ENCODE measurements at regions of chr19 and their contacts with region 1.

Region 1: DNA sequence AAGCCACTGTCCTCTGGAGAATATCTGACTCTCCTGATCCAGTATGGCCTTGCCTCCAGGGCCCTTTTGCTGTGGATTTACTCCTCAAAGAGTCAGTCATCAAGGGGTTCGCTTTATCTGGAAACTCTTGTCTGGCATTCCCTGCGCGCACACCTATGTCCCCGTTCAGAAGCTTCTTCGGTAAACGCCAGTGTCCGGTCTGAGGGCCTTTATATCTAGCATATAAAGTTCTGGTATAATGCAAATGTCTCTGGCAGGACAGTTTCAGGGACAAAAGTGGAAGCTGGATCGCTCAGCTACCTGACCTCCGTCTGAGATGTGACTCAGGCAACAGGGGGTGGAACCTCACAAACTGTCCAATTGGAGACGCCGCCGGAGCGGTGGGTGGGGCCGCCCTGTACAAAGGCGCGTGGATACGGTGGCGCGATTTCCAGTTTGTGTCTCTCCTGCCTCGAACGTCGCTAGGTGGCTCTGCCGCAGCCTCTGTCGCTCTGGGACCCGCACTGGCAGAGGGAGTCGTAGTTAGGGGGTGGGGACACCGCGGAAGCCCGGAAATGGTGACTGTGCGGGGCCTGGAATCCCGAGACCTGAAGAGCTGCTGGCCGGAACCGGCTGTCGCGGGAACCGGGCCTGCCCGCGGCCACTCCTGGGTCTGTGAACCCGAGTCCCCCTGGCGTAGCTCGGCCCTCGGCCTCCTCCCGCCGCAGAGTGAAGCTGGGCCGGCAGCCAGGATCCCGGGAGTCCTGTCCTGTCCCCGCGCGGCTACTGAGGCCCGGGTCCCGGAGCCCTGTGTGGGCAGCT is 10.6 kb upstream of the ZNF709 start:
- DNase-seq: peak; percentile 82
- ATAC-seq: peak; percentile 99
- H3K4me3 Mint-ChIP-seq: peak overlapping the region; percentile 90
- H3K27ac Mint-ChIP-seq: peak overlapping the region; percentile 82
- H3K4me1 Mint-ChIP-seq: peaks cover 13% of the 10 kb centered on the region
- H3K27me3 Mint-ChIP-seq: no peaks in the 10 kb centered on the region
- CTCF ChIP-seq: no peak

Region 2: GRCh38 chr19:12092065-12092867 is 402.9 kb before region 1 on chr19:
- CTCF ChIA-PET with region 1: no interaction called
- POLR2A ChIA-PET with region 1: no interaction called
- intact Hi-C with region 1: no loop called
- DNase-seq: peak; percentile 43
- ATAC-seq: peak; percentile 70
- H3K4me3 Mint-ChIP-seq: peak overlapping the region; percentile 83
- H3K27ac Mint-ChIP-seq: no peak overlapping the region
- H3K4me1 Mint-ChIP-seq: peaks cover 17% of the 10 kb centered on the region
- H3K27me3 Mint-ChIP-seq: peaks cover 3% of the 10 kb centered on the region
- CTCF ChIP-seq: no peak

Region 3: GRCh38 chr19:12365236-12366162 is 129.7 kb before region 1 on chr19 and contains the start of gene ZNF442:
- CTCF ChIA-PET with region 1: interaction called, 3 read pairs
- POLR2A ChIA-PET with region 1: interaction called, 15 read pairs
- intact Hi-C with region 1: no loop called
- DNase-seq: peak; percentile 68
- ATAC-seq: peak; percentile 97
- H3K4me3 Mint-ChIP-seq: peak within 1 kb of the TSS; percentile 96
- H3K27ac Mint-ChIP-seq: peak within 1 kb of the TSS; percentile 91
- H3K4me1 Mint-ChIP-seq: peaks cover 25% of the 10 kb centered on the region
- H3K27me3 Mint-ChIP-seq: no peaks in the 10 kb centered on the region
- CTCF ChIP-seq: no peak
- total RNA-seq, gene ZNF442: 6.9 and 8.7 TPM in 2 replicates

Region 4: GRCh38 chr19:12453491-12453890 is 41.7 kb before region 1 on chr19:
- CTCF ChIA-PET with region 1: no interaction called
- POLR2A ChIA-PET with region 1: no interaction called
- intact Hi-C with region 1: no loop called
- DNase-seq: no peak
- ATAC-seq: no peak
- H3K4me3 Mint-ChIP-seq: no peak overlapping the region
- H3K27ac Mint-ChIP-seq: no peak overlapping the region
- H3K4me1 Mint-ChIP-seq: no peaks in the 10 kb centered on the region
- H3K27me3 Mint-ChIP-seq: no peaks in the 10 kb centered on the region
- CTCF ChIP-seq: no peak

Region 5: DNA sequence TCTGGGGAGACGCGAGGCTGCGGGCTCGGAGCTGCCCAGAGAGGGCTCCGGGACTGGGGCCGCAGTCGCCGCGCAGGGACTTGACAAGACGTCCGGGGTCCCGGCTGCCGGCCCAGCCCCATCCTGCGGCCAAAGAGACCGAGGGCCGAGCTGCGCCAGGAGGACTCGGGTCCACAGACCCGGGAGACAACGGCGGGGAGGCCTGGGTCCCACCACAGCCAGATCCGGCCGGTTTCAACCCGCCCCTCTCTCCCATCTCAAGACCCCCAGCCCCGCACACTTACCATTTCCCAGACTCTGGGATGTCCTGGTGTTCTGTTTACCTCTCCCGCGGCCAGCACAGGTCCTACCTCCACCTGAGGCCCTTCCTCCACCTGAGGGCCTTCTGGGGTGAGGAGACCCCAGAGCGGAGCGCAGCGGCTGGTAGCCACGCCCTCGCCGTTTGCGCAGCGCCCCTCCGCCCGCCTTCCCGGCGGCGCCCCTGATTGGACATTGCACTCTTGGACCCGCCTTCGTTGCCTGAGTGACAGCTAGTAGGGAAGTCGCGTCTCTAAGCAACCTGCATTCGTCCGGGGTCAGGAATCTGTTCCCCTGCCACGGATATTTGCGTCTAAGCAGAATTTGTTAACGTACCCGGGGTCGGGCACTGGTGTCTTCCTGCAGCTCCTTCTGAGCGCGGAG is 10.7 kb before region 1 on chr19 and contains the start of gene ZNF709:
- CTCF ChIA-PET with region 1: interaction called, 5 read pairs
- POLR2A ChIA-PET with region 1: interaction called, 37 read pairs
- intact Hi-C with region 1: loop called (anchors 1 kb)
- DNase-seq: peak; percentile 90
- ATAC-seq: peak; percentile 98
- H3K4me3 Mint-ChIP-seq: peak within 1 kb of the TSS; percentile 96
- H3K27ac Mint-ChIP-seq: peak within 1 kb of the TSS; percentile 88
- H3K4me1 Mint-ChIP-seq: peaks cover 35% of the 10 kb centered on the region
- H3K27me3 Mint-ChIP-seq: no peaks in the 10 kb centered on the region
- CTCF ChIP-seq: no peak
- total RNA-seq, gene ZNF709: 4.8 and 6.4 TPM in 2 replicates

Region 6: DNA sequence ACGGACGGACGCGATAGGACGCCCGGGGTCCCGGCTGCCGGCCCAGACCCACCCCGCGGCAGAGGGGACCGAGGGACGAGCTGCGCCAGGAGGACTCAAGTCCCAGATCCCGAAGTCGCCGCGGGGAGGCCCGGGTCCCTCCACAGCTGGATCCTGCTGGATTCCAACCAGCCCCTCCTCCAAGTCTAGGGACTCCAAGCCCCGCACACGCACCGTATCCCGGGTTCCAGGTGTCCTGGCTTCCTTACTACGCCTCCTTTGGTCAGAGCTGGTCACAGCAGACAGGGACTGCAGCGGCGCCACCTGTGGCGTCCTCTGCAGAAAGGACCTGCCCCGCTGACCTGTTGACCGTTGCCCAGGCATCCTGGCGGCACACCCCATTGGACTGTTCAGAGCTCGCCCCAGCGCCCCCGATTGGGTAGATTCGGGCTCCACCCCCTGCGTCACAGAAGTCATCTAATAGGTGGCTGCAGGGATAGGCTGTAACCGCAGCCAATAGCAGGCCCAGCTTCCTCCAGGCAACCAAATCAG is 18.4 kb after region 1 on chr19:
- CTCF ChIA-PET with region 1: no interaction called
- POLR2A ChIA-PET with region 1: no interaction called
- intact Hi-C with region 1: loop called (anchors 1 kb)
- DNase-seq: no peak
- ATAC-seq: no peak
- H3K4me3 Mint-ChIP-seq: no peak overlapping the region
- H3K27ac Mint-ChIP-seq: no peak overlapping the region
- H3K4me1 Mint-ChIP-seq: no peaks in the 10 kb centered on the region
- H3K27me3 Mint-ChIP-seq: no peaks in the 10 kb centered on the region
- CTCF ChIP-seq: no peak

Region 7: GRCh38 chr19:12551060-12551832 is 56.0 kb after region 1 on chr19 and contains the start of gene ZNF564:
- CTCF ChIA-PET with region 1: no interaction called
- POLR2A ChIA-PET with region 1: interaction called, 9 read pairs
- intact Hi-C with region 1: loop called (anchors 1 kb)
- DNase-seq: peak; percentile 81
- ATAC-seq: peak; percentile 98
- H3K4me3 Mint-ChIP-seq: peak within 1 kb of the TSS; percentile 98
- H3K27ac Mint-ChIP-seq: peak within 1 kb of the TSS; percentile 94
- H3K4me1 Mint-ChIP-seq: peaks cover 48% of the 10 kb centered on the region
- H3K27me3 Mint-ChIP-seq: no peaks in the 10 kb centered on the region
- CTCF ChIP-seq: no peak
- total RNA-seq, gene ZNF564: 23.0 and 26.6 TPM in 2 replicates

Region 8: GRCh38 chr19:12666265-12667048 is 171.3 kb after region 1 on chr19 and contains the starts of genes MAN2B1 and WDR83:
- CTCF ChIA-PET with region 1: no interaction called
- POLR2A ChIA-PET with region 1: no interaction called
- intact Hi-C with region 1: loop called (anchors 5 kb)
- DNase-seq: peak; percentile 83
- ATAC-seq: peak; percentile 70
- H3K4me3 Mint-ChIP-seq: peak within 1 kb of the TSS; percentile 97
- H3K27ac Mint-ChIP-seq: peak within 1 kb of the TSS; percentile 93
- H3K4me1 Mint-ChIP-seq: peaks cover 69% of the 10 kb centered on the region
- H3K27me3 Mint-ChIP-seq: no peaks in the 10 kb centered on the region
- CTCF ChIP-seq: no peak
- total RNA-seq, gene MAN2B1: 251 and 291 TPM in 2 replicates
- total RNA-seq, gene WDR83: 17.7 and 20.8 TPM in 2 replicates

Measured in activated B cell treated with CpG ODN at 0.5 μM for 24 hours (primary cell).